ENCODE measurements at regions of chr3 and their contacts with region 1.

Region 1: GRCh38 chr3:72447059-72447946 is 400.9 kb downstream of the SHQ1 start:
- DNase-seq: peak; percentile 83
- H3K4me3 ChIP-seq: peak overlapping the region; percentile 33 to 92 (median 84)
- H3K27ac ChIP-seq: peak overlapping the region; percentile 89
- H3K4me1 ChIP-seq: peaks cover 18% of the 10 kb centered on the region
- H3K27me3 ChIP-seq: no peaks in the 10 kb centered on the region
- CTCF ChIP-seq: no peak

Region 2: GRCh38 chr3:71885006-71885405 is 562.3 kb before region 1 on chr3:
- CTCF ChIA-PET with region 1: no interaction called
- dilution Hi-C with region 1: no loop called
- in situ Hi-C with region 1: no loop called
- intact Hi-C with region 1: no loop called
- DNase-seq: no peak
- H3K4me3 ChIP-seq: no peak overlapping the region
- H3K27ac ChIP-seq: no peak overlapping the region
- H3K4me1 ChIP-seq: no peaks in the 10 kb centered on the region
- H3K27me3 ChIP-seq: peaks cover 2% of the 10 kb centered on the region
- CTCF ChIP-seq: no peak

Region 3: DNA sequence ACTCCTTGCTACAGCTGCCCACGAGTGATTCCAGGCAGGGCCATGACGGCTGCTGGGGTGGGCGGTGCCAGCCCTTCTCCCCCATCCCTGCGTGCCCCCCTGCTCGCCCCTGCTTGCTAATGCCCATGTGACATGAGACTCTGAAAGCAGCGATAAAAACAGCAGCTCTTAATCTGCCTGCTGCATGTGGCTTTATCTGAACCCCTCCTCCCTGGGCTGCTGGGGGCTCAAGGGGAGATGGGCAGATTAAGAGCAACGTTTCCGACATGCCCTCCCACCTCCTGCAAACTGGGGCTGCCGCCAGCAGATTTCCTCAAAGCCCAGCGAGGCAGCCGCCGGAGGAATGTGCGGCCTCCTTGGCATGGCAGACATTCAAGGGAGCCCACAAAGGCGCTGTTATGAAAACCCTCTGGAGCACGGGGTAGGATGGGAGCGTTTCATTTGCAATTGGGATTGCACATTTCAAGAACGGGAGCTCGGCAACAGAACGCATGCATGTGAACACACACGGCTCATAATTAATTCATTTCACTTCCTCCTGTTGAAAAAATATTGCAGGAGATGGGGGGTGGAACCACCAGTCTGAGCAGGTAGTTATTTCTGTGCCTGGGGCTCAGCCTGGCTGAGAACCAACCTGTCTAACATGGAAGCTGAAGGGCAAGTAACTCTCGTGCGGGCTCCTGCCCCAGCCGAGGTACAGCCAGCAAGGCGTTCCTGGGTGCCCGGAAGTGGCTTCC is 158.2 kb before region 1 on chr3:
- CTCF ChIA-PET with region 1: no interaction called
- dilution Hi-C with region 1: no loop called
- in situ Hi-C with region 1: no loop called
- intact Hi-C with region 1: loop called (anchors 5 kb)
- DNase-seq: peak; percentile 37
- H3K4me3 ChIP-seq: no peak overlapping the region
- H3K27ac ChIP-seq: no peak overlapping the region
- H3K4me1 ChIP-seq: peaks cover 13% of the 10 kb centered on the region
- H3K27me3 ChIP-seq: peaks cover 4% of the 10 kb centered on the region
- CTCF ChIP-seq: no peak

Region 4: GRCh38 chr3:72299321-72299802 is 147.9 kb before region 1 on chr3:
- CTCF ChIA-PET with region 1: no interaction called
- dilution Hi-C with region 1: no loop called
- in situ Hi-C with region 1: no loop called
- intact Hi-C with region 1: no loop called
- DNase-seq: peak; percentile 11
- H3K4me3 ChIP-seq: no peak overlapping the region
- H3K27ac ChIP-seq: no peak overlapping the region
- H3K4me1 ChIP-seq: no peaks in the 10 kb centered on the region
- H3K27me3 ChIP-seq: no peaks in the 10 kb centered on the region
- CTCF ChIP-seq: no peak

Region 5: DNA sequence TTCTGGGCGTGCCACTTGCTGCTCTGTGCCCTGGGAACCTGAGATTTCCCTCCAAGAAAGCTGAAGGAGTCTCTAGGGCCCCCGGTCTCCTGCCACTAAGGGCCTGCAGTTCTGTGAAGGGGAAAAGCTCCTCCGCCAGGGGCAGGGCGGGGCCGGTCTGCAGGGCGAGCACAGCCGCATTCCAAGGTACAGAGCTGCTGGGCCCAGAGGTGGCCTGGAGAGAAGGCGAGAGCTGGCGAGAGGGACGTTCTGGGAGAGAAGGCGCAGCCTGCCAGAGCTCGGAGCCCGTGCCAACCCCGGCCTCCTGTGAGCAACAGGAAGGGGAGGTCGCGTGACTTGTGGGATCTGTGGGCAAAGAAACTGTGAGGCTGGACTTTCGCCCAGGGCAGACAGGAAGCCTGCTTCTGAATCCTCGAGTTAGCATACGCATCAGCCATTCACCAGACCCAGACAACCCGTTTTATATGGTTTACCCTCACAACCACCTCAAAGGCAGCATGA is 99.4 kb before region 1 on chr3:
- CTCF ChIA-PET with region 1: no interaction called
- dilution Hi-C with region 1: no loop called
- in situ Hi-C with region 1: loop called in 1 of 2 experiments (anchors 10 kb)
- intact Hi-C with region 1: no loop called
- DNase-seq: peak; percentile 94
- H3K4me3 ChIP-seq: no peak overlapping the region
- H3K27ac ChIP-seq: no peak overlapping the region
- H3K4me1 ChIP-seq: peaks cover 55% of the 10 kb centered on the region
- H3K27me3 ChIP-seq: peaks cover 3% of the 10 kb centered on the region
- CTCF ChIP-seq: peak; percentile 2 to 38

Region 6: DNA sequence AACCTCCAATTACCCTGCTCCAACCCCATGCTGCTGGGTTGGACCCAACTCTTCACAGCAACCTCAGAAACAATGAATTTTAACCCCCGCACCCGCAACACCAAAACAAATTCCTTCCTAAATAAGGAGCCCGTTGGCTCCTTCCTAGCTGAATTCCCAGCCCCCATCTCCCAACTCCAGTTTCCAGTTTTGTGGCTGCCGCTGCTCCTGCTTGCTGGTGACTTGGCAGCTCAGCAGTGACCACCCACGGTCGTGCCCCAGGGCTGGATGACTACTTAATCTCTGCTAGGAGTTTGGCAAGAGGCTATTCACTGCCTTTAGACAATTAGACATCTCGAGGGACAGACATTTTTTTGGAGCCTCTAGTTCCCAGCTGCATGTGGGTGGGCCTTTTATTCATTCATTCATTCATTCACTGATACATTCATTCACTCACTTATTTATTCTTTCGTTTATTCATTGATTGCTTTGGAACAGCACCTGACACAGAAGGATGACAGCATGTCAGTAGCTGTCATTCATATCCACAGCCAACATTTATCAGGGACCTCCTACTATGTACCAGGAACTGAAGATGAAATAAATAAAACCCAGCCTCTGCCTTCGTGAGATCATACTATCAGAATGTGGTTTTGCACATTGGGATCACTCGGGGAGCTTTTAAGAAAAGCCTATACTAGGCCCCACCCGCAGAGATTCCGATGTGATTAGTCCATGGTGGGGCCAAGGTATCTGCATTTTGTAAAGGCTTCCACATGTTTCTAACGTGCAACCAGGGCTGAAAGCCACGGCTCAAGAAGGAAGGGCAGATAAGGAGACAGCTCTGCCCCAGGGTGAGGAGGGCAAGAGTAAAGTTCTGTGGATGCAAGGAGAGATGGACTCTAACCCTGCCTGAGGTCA is 144.5 kb after region 1 on chr3:
- CTCF ChIA-PET with region 1: no interaction called
- dilution Hi-C with region 1: no loop called
- in situ Hi-C with region 1: no loop called
- intact Hi-C with region 1: loop called (anchors 2 kb)
- DNase-seq: peak; percentile 78
- H3K4me3 ChIP-seq: no peak overlapping the region
- H3K27ac ChIP-seq: peak overlapping the region; percentile 25
- H3K4me1 ChIP-seq: peaks cover 15% of the 10 kb centered on the region
- H3K27me3 ChIP-seq: no peaks in the 10 kb centered on the region
- CTCF ChIP-seq: no peak

Region 7: GRCh38 chr3:72665701-72666443 is 218.6 kb after region 1 on chr3:
- CTCF ChIA-PET with region 1: no interaction called
- dilution Hi-C with region 1: no loop called
- in situ Hi-C with region 1: loop called in 1 of 2 experiments (anchors 10 kb)
- intact Hi-C with region 1: no loop called
- DNase-seq: peak; percentile 21
- H3K4me3 ChIP-seq: no peak overlapping the region
- H3K27ac ChIP-seq: no peak overlapping the region
- H3K4me1 ChIP-seq: peaks cover 6% of the 10 kb centered on the region
- H3K27me3 ChIP-seq: no peaks in the 10 kb centered on the region
- CTCF ChIP-seq: peak; percentile 61 to 65

Region 8: GRCh38 chr3:73010158-73010557 is 562.9 kb after region 1 on chr3:
- CTCF ChIA-PET with region 1: no interaction called
- dilution Hi-C with region 1: no loop called
- in situ Hi-C with region 1: no loop called
- intact Hi-C with region 1: no loop called
- DNase-seq: no peak
- H3K4me3 ChIP-seq: no peak overlapping the region
- H3K27ac ChIP-seq: no peak overlapping the region
- H3K4me1 ChIP-seq: peaks cover 3% of the 10 kb centered on the region
- H3K27me3 ChIP-seq: no peaks in the 10 kb centered on the region
- CTCF ChIP-seq: no peak